ENCODE measurements at regions of chr2 and their contacts with region 1.

Region 1: DNA sequence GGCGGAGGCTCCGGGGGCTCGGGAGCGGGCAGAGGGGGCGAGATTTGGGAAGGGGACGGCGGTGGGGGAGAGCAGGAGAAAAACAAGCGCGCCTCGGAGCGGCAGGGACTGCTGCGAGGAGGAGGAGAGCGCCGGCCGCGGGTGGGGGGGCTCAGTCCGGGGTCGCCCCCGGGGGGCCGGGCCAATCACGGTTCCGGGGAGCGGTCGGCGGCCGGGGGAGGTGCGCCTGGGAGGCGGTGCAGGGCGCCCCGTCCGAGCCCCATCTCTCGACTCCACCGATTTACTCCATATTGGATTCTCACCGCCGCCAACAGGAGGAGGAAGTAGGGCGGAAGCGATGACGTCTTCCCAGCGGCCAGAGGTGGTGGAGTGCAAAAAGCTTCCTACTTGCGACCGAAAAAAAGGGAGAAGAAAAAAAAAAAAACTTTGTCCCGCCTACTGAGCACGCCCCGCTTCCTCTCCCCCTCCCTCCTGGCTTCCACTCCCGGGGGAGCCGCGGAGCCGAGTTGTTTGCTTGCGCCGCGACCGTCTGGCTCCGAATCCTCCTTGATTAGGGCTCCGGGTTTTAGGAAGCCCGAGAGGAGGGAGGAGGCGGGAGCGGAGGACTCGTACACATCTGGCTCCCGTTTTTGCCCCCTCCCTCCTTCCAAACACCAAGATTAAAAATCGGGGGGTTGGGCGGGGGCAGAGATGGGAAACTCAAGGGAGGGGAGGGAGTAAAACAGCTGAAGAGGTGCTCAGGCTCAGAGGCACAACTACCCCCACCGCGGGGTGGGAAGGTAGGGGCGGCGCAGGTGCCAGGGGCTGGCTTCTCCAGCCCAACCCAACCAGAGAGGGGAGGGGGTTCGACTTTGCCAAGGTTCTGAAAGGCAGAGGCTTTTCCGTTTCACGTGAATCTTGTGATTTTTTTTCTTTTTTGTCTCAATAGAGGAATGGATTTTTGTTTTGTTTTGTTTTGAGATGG is at the start of gene SPRED2:
- DNase-seq: peak; percentile 64 to 86 (median 67)
- H3K4me3 ChIP-seq: peak within 1 kb of the TSS; percentile 39 to 62
- H3K4me3 Mint-ChIP-seq: peak within 1 kb of the TSS; percentile 90 to 97 (median 91)
- H3K27ac ChIP-seq: peak within 1 kb of the TSS; percentile 34
- H3K27ac Mint-ChIP-seq: peak within 1 kb of the TSS; percentile 78 to 93 (median 87)
- H3K4me1 ChIP-seq: peaks cover 30% of the 10 kb centered on the region
- H3K4me1 Mint-ChIP-seq: peaks cover 10 to 40% (median 14%) of the 10 kb centered on the region in 4 donors
- H3K27me3 ChIP-seq: peaks cover 10% of the 10 kb centered on the region
- H3K27me3 Mint-ChIP-seq: peaks cover 11 to 29% of the 10 kb centered on the region in 2 donors
- total RNA-seq, gene SPRED2: 0.52 to 0.72 TPM

Region 2: DNA sequence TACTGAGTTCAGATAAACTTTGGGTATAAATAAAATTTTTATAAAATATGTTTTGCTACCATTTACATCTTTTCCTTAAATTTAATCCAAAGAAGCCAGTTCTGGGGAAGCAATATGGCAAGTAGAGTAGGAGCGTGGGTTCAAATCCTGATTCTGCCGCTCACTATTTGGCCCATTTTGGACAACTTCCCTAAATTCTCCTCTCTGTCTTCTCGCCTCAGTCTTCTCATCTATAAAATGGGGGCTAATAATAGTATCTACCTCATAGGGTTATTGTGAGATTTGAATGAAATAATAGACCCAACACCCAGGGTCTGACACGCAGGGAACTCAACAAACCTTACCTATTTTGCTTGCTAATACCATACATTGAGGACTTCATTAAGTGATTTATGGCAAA is 145.1 kb before region 1 on chr2:
- CTCF ChIA-PET with region 1: no interaction called
- POLR2A ChIA-PET with region 1: no interaction called
- intact Hi-C with region 1: no loop called
- DNase-seq: no peak
- H3K4me3 ChIP-seq: no peak overlapping the region
- H3K4me3 Mint-ChIP-seq: no peak overlapping the region
- H3K27ac ChIP-seq: no peak overlapping the region
- H3K27ac Mint-ChIP-seq: no peak overlapping the region
- H3K4me1 ChIP-seq: no peaks in the 10 kb centered on the region
- H3K4me1 Mint-ChIP-seq: no peaks in the 10 kb centered on the region
- H3K27me3 ChIP-seq: no peaks in the 10 kb centered on the region
- H3K27me3 Mint-ChIP-seq: no peaks in the 10 kb centered on the region

Region 3: GRCh38 chr2:65300761-65301711 is 131.5 kb before region 1 on chr2:
- CTCF ChIA-PET with region 1: interaction called, 3 read pairs
- POLR2A ChIA-PET with region 1: no interaction called
- intact Hi-C with region 1: loop called (anchors 2 kb)
- DNase-seq: peak; percentile 66 to 79 (median 72)
- H3K4me3 ChIP-seq: peak overlapping the region; percentile 26 to 27
- H3K4me3 Mint-ChIP-seq: peak overlapping the region; percentile 74 to 91 (median 82)
- H3K27ac ChIP-seq: no peak overlapping the region
- H3K27ac Mint-ChIP-seq: peak overlapping the region; percentile 73 to 94 (median 93)
- H3K4me1 ChIP-seq: peaks cover 36% of the 10 kb centered on the region
- H3K4me1 Mint-ChIP-seq: peaks cover 20 to 50% (median 34%) of the 10 kb centered on the region in 4 donors
- H3K27me3 ChIP-seq: no peaks in the 10 kb centered on the region
- H3K27me3 Mint-ChIP-seq: peaks cover 0 to 2% of the 10 kb centered on the region in 2 donors

Region 4: DNA sequence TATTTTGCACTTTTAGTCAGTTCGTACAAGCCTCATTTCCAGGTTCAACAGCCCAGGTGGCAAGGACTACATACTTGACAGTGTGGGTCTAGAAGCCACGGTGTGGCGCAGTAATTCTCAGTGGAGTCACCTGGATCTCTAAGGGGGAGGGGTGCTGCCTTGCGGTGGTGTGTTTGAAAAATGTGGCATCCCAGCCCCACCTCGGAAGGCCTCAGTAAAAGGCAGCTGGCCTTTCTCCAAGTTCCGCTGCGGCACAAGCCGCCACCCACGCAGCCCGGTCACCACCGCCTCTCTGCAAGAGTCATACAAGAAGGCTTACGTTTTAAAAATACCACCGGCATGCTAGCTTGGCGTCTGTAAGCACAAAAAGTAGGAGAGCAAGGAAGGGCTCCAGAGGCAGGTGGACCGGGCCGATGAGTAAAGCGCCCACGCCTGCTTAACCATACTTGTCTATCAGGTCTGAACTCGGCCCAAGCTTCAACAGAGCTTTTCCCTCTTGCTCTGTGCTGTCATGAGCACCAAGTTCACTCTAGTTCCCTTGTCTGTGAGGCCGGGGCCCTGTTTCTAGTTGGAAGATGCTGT is 49.6 kb before region 1 on chr2:
- CTCF ChIA-PET with region 1: interaction called, 4 read pairs
- POLR2A ChIA-PET with region 1: no interaction called
- intact Hi-C with region 1: loop called (anchors 2 kb)
- DNase-seq: peak; percentile 69 to 80 (median 73)
- H3K4me3 ChIP-seq: no peak overlapping the region
- H3K4me3 Mint-ChIP-seq: peak overlapping the region; percentile 60 to 87 (median 78)
- H3K27ac ChIP-seq: no peak overlapping the region
- H3K27ac Mint-ChIP-seq: peak overlapping the region; percentile 72 to 87 (median 84)
- H3K4me1 ChIP-seq: peaks cover 23% of the 10 kb centered on the region
- H3K4me1 Mint-ChIP-seq: peaks cover 11 to 40% (median 21%) of the 10 kb centered on the region in 4 donors
- H3K27me3 ChIP-seq: no peaks in the 10 kb centered on the region
- H3K27me3 Mint-ChIP-seq: no peaks in the 10 kb centered on the region